HEK293T (cell line): ENCODE measurements at regions of chr15 and their contacts with region 1.

Region 1: GRCh38 chr15:38690689-38691332 is 126.2 kb upstream of the RASGRP1 start:
- DNase-seq: peak; percentile 32

Region 2: GRCh38 chr15:37995461-37996347 is 695.1 kb before region 1 on chr15:
- CTCF ChIA-PET with region 1: interaction called, 13 read pairs
- POLR2A ChIA-PET with region 1: no interaction called
- DNase-seq: peak; percentile 15

Region 3: DNA sequence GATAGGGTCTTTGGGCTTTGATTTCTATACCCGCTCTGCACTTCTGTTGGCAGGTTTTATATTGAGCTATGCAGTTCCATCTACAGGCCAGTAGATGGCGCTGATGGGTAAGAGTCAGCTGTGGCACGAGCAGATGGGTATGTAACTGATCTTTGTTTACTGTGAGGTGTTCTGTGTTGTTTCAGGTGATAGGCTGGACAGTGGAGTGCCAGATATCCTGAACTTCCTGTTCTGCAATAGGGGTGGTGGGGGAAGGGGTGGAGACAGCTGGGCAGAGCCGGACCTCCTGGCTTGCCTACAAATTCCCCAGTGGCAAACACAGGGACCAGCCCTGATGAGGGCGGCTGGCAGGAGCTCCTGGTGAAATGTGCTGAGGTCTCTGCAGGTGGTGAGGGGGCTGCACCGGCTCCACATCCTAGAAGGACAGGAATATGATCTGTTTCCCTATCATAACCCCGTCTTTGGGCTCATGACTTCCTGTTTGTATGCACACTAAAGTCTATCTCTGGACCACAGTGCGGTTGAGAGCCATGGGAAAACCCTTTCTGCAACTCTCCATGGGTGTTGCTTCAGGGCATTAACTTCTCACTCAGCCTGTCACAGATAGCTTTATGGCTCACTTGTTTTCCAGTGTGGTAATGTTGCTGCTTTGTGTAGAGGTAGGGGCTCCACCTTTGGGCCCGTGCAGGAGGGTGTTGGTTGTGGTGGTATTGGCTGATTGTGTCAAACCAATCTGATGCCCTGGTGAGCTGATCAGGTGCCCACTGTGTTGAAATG is 250.3 kb before region 1 on chr15:
- CTCF ChIA-PET with region 1: interaction called, 20 read pairs
- POLR2A ChIA-PET with region 1: no interaction called
- DNase-seq: peak; percentile 41

Region 4: GRCh38 chr15:38563723-38564519 is 126.9 kb before region 1 on chr15:
- CTCF ChIA-PET with region 1: interaction called, 17 read pairs
- POLR2A ChIA-PET with region 1: no interaction called
- DNase-seq: peak; percentile 57

Region 5: DNA sequence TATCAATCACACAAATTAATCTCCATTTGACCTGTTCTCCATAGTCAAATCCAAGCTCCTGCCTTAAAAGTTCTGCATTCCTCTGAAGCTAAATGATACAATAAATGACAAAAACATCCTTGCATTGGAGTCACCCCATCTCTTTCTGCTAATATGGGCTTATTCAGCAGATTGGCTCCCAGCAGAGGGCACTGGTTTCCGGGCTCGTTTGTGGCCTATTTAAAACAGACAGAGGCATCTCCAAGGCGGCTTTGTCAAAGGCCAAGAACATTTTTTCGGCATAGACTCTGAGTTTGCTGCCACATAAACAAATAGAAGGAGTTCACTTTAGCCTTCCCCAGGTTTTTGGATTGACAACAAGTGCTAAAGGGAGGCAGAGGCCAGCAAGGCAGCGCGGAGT is 78.2 kb after region 1 on chr15:
- CTCF ChIA-PET with region 1: no interaction called
- POLR2A ChIA-PET with region 1: no interaction called
- DNase-seq: peak; percentile 4